Activated naive CD8-positive, alpha-beta T cell treated with anti-CD3 and anti-CD28 coated beads, Interleukin-2, amount 10 ng/mL, durations not matched to agents 7 days and 5 days (primary cell): ENCODE measurements at regions of chr2 and their contacts with region 1.

Region 1: DNA sequence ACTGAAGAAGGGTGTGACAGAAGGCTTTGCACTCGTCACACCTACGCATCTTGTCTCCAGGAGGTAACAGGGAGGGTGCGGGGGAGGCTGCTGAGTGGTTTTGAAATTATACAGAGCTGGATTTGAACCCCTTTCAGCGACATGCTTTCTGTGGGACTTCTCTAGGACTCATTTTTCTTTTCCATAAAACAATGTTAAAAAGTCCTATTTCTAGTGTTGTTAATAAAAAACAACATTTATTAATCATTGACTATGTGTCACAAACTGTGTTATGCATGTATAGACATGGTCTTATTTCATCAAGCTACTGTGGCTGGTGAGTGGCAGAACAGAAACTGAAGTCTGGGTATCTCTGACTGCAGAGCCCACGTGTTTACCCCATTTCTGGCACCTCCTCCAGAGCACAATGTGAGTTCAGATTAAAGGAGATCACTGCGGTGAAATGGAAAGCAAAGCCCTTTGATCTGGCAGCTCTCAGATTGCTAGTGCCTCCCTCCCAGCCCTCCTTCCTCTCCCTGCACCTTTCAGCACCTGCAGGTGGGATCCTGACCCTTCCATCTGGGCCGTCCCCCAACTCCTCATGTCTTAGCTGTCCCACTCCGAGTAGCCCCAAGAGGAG is 315.5 kb upstream of the MYT1L start:
- DNase-seq: peak; percentile 47
- ATAC-seq: peak; percentile 94
- H3K4me3 Mint-ChIP-seq: peak overlapping the region; percentile 72
- H3K27ac Mint-ChIP-seq: peak overlapping the region; percentile 79
- H3K4me1 Mint-ChIP-seq: peaks cover 32% of the 10 kb centered on the region
- H3K27me3 Mint-ChIP-seq: no peaks in the 10 kb centered on the region

Region 2: GRCh38 chr2:2613279-2614199 is 33.0 kb before region 1 on chr2:
- POLR2A ChIA-PET with region 1: interaction called, 16 read pairs
- DNase-seq: peak; percentile 85
- ATAC-seq: peak; percentile 98
- H3K4me3 Mint-ChIP-seq: peak overlapping the region; percentile 83
- H3K27ac Mint-ChIP-seq: peak overlapping the region; percentile 84
- H3K4me1 Mint-ChIP-seq: peaks cover 8% of the 10 kb centered on the region
- H3K27me3 Mint-ChIP-seq: peaks cover 15% of the 10 kb centered on the region

Region 3: GRCh38 chr2:2657121-2657962 is 10.8 kb after region 1 on chr2:
- POLR2A ChIA-PET with region 1: no interaction called
- DNase-seq: no peak
- ATAC-seq: peak; percentile 68
- H3K4me3 Mint-ChIP-seq: no peak overlapping the region
- H3K27ac Mint-ChIP-seq: no peak overlapping the region
- H3K4me1 Mint-ChIP-seq: peaks cover 5% of the 10 kb centered on the region
- H3K27me3 Mint-ChIP-seq: no peaks in the 10 kb centered on the region

Region 4: GRCh38 chr2:2671826-2672225 is 25.3 kb after region 1 on chr2:
- POLR2A ChIA-PET with region 1: no interaction called
- DNase-seq: no peak
- ATAC-seq: no peak
- H3K4me3 Mint-ChIP-seq: no peak overlapping the region
- H3K27ac Mint-ChIP-seq: no peak overlapping the region
- H3K4me1 Mint-ChIP-seq: no peaks in the 10 kb centered on the region
- H3K27me3 Mint-ChIP-seq: peaks cover 2% of the 10 kb centered on the region